ENCODE measurements at regions of chr6 and their contacts with region 1.

Region 1: DNA sequence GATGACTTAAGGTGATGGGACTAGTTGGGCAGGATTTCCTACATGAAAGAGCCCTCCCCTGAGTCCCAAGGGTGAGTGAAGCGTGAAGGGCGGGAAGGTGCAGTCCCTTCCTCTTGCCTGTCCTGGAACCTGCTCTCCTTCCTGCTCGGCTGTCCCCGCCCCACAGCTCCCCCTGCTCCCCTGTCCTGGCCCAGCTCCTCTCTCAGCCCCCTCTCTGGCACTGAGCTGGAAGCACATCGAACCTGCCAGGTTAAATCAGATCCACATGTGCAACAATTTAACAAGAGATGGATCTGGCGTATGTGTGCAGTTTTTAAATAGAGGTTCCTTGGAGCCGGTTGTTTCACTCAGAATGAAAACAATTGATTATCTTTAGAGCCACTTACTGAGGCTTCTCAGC is 95.0 kb downstream of the LRFN2 start:
- DNase-seq: no peak
- ATAC-seq: no peak

Region 2: DNA sequence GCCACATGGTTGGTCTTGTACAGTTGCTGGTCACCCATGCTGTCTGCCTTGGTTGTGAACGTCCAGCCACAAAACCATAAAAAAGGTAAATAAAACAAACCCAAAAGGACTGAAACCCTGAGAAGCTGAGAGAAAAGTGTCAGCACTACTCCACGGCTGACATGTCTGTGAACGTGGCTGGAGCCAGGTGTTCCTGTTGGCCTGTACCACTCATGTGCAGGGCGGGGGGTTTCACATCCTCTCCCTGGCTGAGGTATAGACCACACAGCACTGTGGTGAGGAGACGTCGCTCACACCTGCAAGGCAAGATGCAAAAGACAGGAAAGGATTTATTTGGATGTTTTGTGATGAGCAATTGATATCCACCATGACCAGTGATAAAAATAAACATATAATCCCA is 1777.4 kb after region 1 on chr6:
- intact Hi-C with region 1: loop called (anchors 5 kb)
- DNase-seq: peak; percentile 17
- ATAC-seq: no peak

Measured in sciatic nerve (tissue), 2 donors.